AG04450 (cell line): ENCODE measurements at regions of chr3 and their contacts with region 1.

Region 1: GRCh38 chr3:184874709-184875644 is 63.0 kb downstream of the VPS8 start:
- DNase-seq: no peak
- H3K4me3 ChIP-seq: no peak overlapping the region
- H3K27ac ChIP-seq: no peak overlapping the region
- H3K27me3 ChIP-seq: no peaks in the 10 kb centered on the region
- CTCF ChIP-seq: peak; percentile 64

Region 2: DNA sequence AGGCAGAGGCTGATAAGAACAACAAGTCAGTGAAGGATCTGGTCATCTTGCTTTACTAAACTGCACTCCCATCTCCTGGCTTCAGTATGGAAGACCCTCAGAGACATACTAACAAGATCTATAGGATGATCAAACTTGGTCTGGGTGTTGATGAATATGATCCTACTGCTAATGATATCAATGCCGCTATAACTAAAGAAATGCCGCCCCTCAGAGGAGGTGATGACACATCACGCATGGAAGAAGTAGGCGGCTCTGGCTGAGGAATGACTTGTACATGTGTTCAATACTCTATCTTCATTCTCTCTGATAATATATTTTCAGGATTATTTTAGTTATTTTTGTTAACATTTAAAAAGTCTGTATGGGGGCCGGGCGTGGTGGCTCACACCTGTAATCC is 757.3 kb before region 1 on chr3:
- CTCF ChIA-PET with region 1: no interaction called
- POLR2A ChIA-PET with region 1: no interaction called
- DNase-seq: no peak
- H3K4me3 ChIP-seq: no peak overlapping the region
- H3K27ac ChIP-seq: no peak overlapping the region
- H3K27me3 ChIP-seq: peaks cover 4% of the 10 kb centered on the region
- CTCF ChIP-seq: no peak

Region 3: GRCh38 chr3:184937611-184938010 is 62.6 kb after region 1 on chr3:
- CTCF ChIA-PET with region 1: interaction called, 10 read pairs
- POLR2A ChIA-PET with region 1: no interaction called
- DNase-seq: no peak
- H3K4me3 ChIP-seq: no peak overlapping the region
- H3K27ac ChIP-seq: no peak overlapping the region
- H3K27me3 ChIP-seq: no peaks in the 10 kb centered on the region
- CTCF ChIP-seq: no peak

Region 4: GRCh38 chr3:185176750-185177359 is 301.9 kb after region 1 on chr3:
- CTCF ChIA-PET with region 1: interaction called, 60 read pairs
- POLR2A ChIA-PET with region 1: no interaction called
- DNase-seq: no peak
- H3K4me3 ChIP-seq: no peak overlapping the region
- H3K27ac ChIP-seq: no peak overlapping the region
- H3K27me3 ChIP-seq: peaks cover 9% of the 10 kb centered on the region
- CTCF ChIP-seq: peak; percentile 67

Region 5: GRCh38 chr3:185200635-185201034 is 325.7 kb after region 1 on chr3:
- CTCF ChIA-PET with region 1: interaction called, 10 read pairs
- POLR2A ChIA-PET with region 1: no interaction called
- DNase-seq: no peak
- H3K4me3 ChIP-seq: no peak overlapping the region
- H3K27ac ChIP-seq: no peak overlapping the region
- H3K27me3 ChIP-seq: no peaks in the 10 kb centered on the region
- CTCF ChIP-seq: no peak

Region 6: GRCh38 chr3:185215873-185216606 is 341.1 kb after region 1 on chr3:
- CTCF ChIA-PET with region 1: interaction called, 10 read pairs
- POLR2A ChIA-PET with region 1: no interaction called
- DNase-seq: no peak
- H3K4me3 ChIP-seq: no peak overlapping the region
- H3K27ac ChIP-seq: no peak overlapping the region
- H3K27me3 ChIP-seq: no peaks in the 10 kb centered on the region
- CTCF ChIP-seq: peak; percentile 55

Region 7: DNA sequence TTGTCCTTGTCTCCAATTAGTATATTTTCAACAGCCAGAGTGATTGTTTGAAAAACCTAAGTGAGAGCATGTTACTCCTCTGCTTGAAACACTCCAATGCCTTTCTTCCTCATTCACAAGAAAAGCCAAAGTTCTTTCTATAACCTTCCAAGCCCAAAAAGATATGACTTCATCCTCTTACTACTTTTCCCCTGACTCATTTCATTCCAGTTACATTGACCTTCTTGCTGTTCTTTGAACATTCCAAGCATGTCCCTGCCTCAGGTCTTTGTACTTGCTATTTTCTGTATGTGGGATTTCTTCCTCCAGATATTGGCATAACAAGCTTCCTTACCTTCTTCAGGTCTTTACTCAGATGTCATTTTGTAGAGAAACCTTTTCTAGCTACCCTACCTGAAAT is 350.5 kb after region 1 on chr3:
- CTCF ChIA-PET with region 1: interaction called, 10 read pairs
- POLR2A ChIA-PET with region 1: no interaction called
- DNase-seq: peak; percentile 44
- H3K4me3 ChIP-seq: no peak overlapping the region
- H3K27ac ChIP-seq: peak overlapping the region; percentile 53
- H3K27me3 ChIP-seq: no peaks in the 10 kb centered on the region
- CTCF ChIP-seq: no peak